ENCODE measurements at regions of chr15 and their contacts with region 1.

Region 1: GRCh38 chr15:70488002-70488605 is 275.3 kb downstream of the UACA start:
- DNase-seq: peak in 41 of 42 donors; percentile 51 to 90 (median 79)

Region 2: DNA sequence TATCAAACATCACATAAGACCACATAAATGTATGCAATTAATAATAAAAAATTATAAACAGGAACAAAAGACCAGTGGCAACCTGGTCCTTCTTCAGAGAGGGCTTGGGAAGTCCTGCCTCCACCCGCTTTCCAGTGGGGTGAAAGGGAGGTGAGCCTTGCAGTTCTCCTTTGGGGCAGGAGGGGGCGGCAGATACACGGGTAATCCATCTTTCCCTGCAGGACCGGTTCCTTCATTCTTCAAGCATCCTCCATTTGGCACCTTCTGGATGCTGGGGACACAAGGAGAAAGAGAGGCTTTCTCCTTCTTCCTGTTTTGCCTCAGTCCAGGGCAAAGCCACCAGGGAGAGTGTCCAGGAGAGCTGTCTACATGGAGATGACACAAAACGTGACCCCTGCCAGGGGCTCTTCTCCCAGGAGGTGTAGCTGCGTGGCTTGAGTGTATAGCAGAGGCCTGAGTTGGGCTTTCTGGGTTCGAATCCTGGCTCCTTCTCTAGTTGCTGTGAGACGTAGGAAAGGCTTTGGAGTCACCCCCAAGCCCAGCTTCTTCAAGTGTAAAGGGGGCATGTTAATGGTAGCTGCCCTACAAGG is 1012.2 kb before region 1 on chr15:
- intact Hi-C with region 1: loop called (anchors 5 kb)
- DNase-seq: peak; percentile 52 to 93 (median 84)

Region 3: GRCh38 chr15:69576035-69576526 is 912.0 kb before region 1 on chr15:
- intact Hi-C with region 1: loop called (anchors 10 kb)
- DNase-seq: peak; percentile 53 to 84 (median 72)

Region 4: DNA sequence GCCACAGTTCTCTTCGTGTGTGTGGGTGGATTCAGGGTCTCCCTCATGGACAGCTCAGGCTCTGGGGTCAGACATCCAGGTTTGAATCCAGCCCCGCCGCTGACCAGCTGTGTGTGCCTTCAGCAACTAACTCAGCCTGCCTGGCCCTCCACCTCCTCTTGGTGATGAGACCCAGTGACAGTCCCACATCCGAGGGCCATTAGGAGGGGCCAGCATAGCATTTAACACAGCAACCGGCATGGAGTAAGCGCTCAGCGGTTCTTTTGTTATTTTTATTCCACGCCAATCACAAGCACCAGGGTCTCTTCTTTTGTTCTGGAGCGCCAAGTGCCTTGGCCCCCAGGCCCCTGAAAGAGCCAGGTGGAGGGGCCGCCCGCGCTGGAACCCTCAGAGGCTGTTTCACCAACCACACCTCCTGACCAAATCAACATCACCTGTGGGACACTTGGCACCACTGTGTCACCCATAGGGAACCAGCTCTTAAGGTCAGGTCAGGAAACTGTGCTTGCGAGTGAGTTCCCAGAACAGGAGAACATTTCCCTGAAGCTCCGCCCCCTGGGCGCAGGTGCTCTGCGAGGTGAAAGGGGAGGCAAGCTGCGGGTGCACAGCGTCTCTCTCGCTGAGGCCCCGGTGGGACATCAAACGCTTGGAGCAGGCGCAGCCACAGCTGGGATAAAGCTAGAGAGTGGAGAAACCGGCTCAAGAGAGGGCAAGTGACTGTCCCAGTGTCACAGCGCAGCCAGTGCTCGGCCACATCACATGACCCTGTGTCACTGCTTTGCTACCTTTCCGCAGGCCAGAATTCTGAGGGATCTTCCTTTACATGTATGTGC is 36.1 kb before region 1 on chr15:
- intact Hi-C with region 1: loop called (anchors 2 kb)
- DNase-seq: no peak

Measured in head of caudate nucleus (tissue), 42 donors.